SK-N-SH (cell line): ENCODE measurements at regions of chr14 and their contacts with region 1.

Region 1: DNA sequence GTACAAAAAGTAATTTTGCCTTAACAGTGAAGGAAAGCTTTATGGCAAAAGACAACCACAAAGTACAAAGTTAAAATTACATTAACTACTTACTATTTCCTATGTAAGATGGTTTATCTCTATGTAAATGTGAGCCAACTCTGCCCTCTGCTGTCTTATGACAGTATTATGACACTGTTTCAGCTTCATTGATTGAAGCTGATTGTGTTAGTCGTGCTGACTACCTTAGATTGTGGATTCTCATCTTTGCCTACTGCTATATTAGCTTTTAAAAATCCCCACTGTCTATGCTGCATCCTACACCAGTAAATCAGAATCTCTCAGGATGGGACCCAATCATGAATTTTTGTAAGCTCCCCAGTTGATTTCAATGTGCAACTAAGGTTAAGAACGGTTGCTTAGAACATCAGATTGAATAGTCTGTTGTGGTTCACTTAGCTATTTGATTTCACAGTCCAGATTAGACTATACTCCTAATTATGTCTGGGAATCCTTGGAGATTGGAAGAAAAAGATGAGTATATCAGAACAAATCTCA is 12.2 kb upstream of the SPTB start:
- DNase-seq: peak; percentile 48
- H3K4me3 ChIP-seq: no peak overlapping the region; a peak in 1 of 4 replicates
- H3K27ac ChIP-seq: no peak overlapping the region
- H3K4me1 ChIP-seq: no peaks in the 10 kb centered on the region
- H3K27me3 ChIP-seq: no peaks in the 10 kb centered on the region; the same call in 1 of the 2 replicates
- CTCF ChIP-seq: peak; percentile 77
- EP300 ChIP-seq: no peak
- RAD21 ChIP-seq: peak; percentile 87

Region 2: GRCh38 chr14:64671591-64671990 is 220.3 kb before region 1 on chr14:
- CTCF ChIA-PET with region 1: interaction called, 73 read pairs
- POLR2A ChIA-PET with region 1: no interaction called
- DNase-seq: peak; percentile 69
- H3K4me3 ChIP-seq: no peak overlapping the region; a peak in 1 of 4 replicates
- H3K27ac ChIP-seq: no peak overlapping the region
- H3K4me1 ChIP-seq: no peaks in the 10 kb centered on the region; a peak in 1 of 4 replicates
- H3K27me3 ChIP-seq: no peaks in the 10 kb centered on the region
- CTCF ChIP-seq: peak; percentile 81
- EP300 ChIP-seq: no peak
- RAD21 ChIP-seq: peak; percentile 91

Region 3: DNA sequence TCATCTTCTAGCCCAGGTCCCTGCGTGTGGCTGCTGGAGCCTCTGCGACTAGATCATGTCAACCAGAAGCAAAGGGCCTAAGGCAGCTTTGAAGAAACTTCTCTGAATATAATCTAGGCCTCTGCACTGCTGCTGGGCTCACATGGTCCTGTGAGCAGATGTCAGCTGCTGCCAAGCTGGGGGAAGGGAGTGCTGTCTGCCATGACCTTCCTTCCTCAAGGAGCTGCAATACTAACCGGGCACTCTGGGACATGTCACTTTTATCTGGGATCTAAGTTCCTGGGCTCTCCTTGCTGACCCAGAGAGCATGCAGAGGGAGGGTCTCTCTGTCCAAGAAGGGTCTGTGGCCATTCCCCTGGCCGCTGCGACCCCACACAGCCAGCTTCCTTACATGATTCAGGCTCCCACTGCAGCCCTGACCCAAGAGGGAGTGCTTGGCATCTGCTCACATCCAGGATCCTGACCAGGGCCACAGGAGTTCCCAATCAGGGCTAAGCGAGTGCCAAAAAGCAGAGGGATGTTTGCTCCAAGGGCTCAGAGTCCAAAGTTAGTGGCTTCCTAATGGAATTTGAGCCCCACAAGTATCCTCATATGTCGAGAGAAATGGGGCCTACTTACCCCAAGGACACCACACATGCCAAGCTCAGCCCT is 113.7 kb before region 1 on chr14:
- CTCF ChIA-PET with region 1: interaction called, 18 read pairs
- POLR2A ChIA-PET with region 1: interaction called, 3 read pairs
- DNase-seq: no peak
- H3K4me3 ChIP-seq: no peak overlapping the region
- H3K27ac ChIP-seq: no peak overlapping the region
- H3K4me1 ChIP-seq: peaks cover 0 to 6% of the 10 kb centered on the region in 2 experiments; a peak in 1 of 4 replicates
- H3K27me3 ChIP-seq: no peaks in the 10 kb centered on the region
- CTCF ChIP-seq: no peak
- EP300 ChIP-seq: no peak
- RAD21 ChIP-seq: no peak

Region 4: GRCh38 chr14:64806202-64806860 is 85.6 kb before region 1 on chr14:
- CTCF ChIA-PET with region 1: interaction called, 138 read pairs
- POLR2A ChIA-PET with region 1: no interaction called
- DNase-seq: no peak
- H3K4me3 ChIP-seq: no peak overlapping the region; a peak in 1 of 4 replicates
- H3K27ac ChIP-seq: peak overlapping the region; percentile 67 to 100; a peak in 3 of 4 replicates
- H3K4me1 ChIP-seq: peaks cover 10 to 26% of the 10 kb centered on the region in 2 experiments; a peak in 3 of 4 replicates
- H3K27me3 ChIP-seq: no peaks in the 10 kb centered on the region
- CTCF ChIP-seq: no peak
- EP300 ChIP-seq: peak; percentile 17 to 98; a peak in 2 of 4 replicates
- RAD21 ChIP-seq: no peak

Region 5: GRCh38 chr14:64823305-64823861 is 68.5 kb before region 1 on chr14:
- CTCF ChIA-PET with region 1: interaction called, 163 read pairs
- POLR2A ChIA-PET with region 1: interaction called, 5 read pairs
- DNase-seq: peak; percentile 89
- H3K4me3 ChIP-seq: no peak overlapping the region; a peak in 1 of 4 replicates
- H3K27ac ChIP-seq: no peak overlapping the region
- H3K4me1 ChIP-seq: peaks cover 0 to 22% of the 10 kb centered on the region in 2 experiments; a peak in 1 of 4 replicates
- H3K27me3 ChIP-seq: no peaks in the 10 kb centered on the region
- CTCF ChIP-seq: peak; percentile 78
- EP300 ChIP-seq: no peak
- RAD21 ChIP-seq: peak; percentile 80

Region 6: DNA sequence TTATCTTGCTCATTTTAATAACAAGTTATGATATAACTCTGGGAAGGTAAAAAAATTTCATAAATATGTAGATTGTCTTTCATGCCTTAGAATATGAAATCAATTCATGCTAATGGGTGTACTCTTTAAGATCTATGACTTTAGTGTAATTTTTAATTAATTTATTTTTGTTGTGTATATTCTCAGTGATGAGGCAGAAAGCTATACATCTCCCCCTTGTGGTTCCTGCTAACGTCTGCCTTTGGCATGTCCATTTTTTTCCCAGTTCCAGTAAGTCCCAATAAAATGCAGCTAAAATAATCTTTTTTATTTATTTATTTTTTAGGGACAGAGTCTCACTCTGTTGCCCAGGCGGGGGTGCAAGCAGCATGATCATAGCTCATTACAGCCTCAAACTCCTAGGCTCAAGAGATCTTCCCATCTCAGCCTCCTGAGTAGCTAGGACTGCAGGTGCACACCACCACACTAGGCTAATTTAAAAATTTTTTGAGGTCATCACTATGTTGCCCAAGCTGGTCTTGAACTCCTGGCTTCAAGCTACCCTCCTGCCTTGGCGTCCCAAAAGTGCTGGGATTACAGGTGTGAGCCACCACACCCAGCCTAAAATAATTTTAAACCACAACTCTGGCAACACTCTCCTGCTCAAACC is 19.1 kb after region 1 on chr14:
- CTCF ChIA-PET with region 1: interaction called, 44 read pairs
- POLR2A ChIA-PET with region 1: no interaction called
- DNase-seq: peak; percentile 35
- H3K4me3 ChIP-seq: no peak overlapping the region
- H3K27ac ChIP-seq: no peak overlapping the region
- H3K4me1 ChIP-seq: peaks cover 0 to 9% of the 10 kb centered on the region in 2 experiments; a peak in 2 of 4 replicates
- H3K27me3 ChIP-seq: no peaks in the 10 kb centered on the region
- CTCF ChIP-seq: peak; percentile 87
- EP300 ChIP-seq: no peak
- RAD21 ChIP-seq: peak; percentile 67